ENCODE measurements at regions of chr2 and their contacts with region 1.

Region 1: GRCh38 chr2:101001691-101002561 is at the start of gene RPL31:
- DNase-seq: peak; percentile 86 to 92
- H3K4me3 ChIP-seq: peak within 1 kb of the TSS; percentile 96
- H3K27ac ChIP-seq: peak within 1 kb of the TSS; percentile 89
- H3K4me1 ChIP-seq: peaks cover 14% of the 10 kb centered on the region
- H3K27me3 ChIP-seq: no peaks in the 10 kb centered on the region
- CTCF ChIP-seq: no peak
- total RNA-seq, gene RPL31: 1,090 and 1,251 TPM in 2 replicates

Region 2: DNA sequence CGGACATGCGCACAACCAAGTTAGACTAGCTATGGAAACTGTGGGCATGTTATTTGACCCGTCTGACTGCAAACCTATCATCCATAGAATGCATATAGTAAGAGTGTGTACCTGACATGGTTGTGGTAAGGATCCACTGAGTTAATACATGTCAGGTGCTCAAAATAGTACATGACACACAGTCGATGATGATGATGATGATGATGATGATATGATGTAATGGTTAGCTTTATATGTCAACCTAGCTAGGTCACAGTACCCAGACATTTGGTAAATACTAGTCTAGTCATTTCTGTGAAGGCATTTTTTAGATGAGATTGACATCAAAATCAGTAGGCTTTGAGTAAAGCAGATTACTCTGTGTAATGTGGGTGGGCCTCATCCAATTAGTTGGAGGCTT is 1063.7 kb before region 1 on chr2:
- CTCF ChIA-PET with region 1: no interaction called
- POLR2A ChIA-PET with region 1: interaction called, 15 read pairs
- intact Hi-C with region 1: no loop called
- DNase-seq: no peak
- H3K4me3 ChIP-seq: no peak overlapping the region
- H3K27ac ChIP-seq: no peak overlapping the region
- H3K4me1 ChIP-seq: no peaks in the 10 kb centered on the region
- H3K27me3 ChIP-seq: peaks cover 70% of the 10 kb centered on the region
- CTCF ChIP-seq: no peak

Region 3: GRCh38 chr2:100761365-100761764 is 240.6 kb before region 1 on chr2:
- CTCF ChIA-PET with region 1: no interaction called
- POLR2A ChIA-PET with region 1: no interaction called
- intact Hi-C with region 1: no loop called
- DNase-seq: peak in 1 of 2 experiments; percentile 50
- H3K4me3 ChIP-seq: no peak overlapping the region
- H3K27ac ChIP-seq: peak overlapping the region; percentile 24; the same call in 1 of the 2 replicates
- H3K4me1 ChIP-seq: peaks cover 37% of the 10 kb centered on the region
- H3K27me3 ChIP-seq: no peaks in the 10 kb centered on the region
- CTCF ChIP-seq: no peak

Region 4: GRCh38 chr2:101052147-101052546 is 50.2 kb after region 1 on chr2:
- CTCF ChIA-PET with region 1: no interaction called
- POLR2A ChIA-PET with region 1: no interaction called
- intact Hi-C with region 1: no loop called
- DNase-seq: no peak
- H3K4me3 ChIP-seq: no peak overlapping the region
- H3K27ac ChIP-seq: no peak overlapping the region
- H3K4me1 ChIP-seq: peaks cover 10% of the 10 kb centered on the region
- H3K27me3 ChIP-seq: no peaks in the 10 kb centered on the region
- CTCF ChIP-seq: no peak

Region 5: DNA sequence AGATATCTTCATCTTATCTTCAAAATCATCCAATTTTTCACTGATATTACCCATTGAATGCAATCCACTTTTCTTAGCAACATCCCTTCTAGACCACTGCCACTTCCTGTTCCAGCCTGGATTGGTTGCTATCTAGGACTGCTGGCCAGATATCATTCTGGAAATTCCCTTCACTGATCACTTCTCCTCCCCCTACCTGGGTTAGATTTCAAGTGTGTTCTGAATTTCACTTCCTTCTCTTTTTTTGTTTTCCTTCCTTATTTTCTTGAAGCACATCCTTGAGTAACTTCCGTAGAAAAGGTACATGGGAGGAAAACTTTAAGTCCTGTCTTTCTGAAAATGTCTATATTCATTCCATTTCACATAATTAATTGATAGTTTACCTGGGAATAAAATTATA is 907.8 kb after region 1 on chr2:
- CTCF ChIA-PET with region 1: no interaction called
- POLR2A ChIA-PET with region 1: no interaction called
- intact Hi-C with region 1: no loop called
- DNase-seq: no peak
- H3K4me3 ChIP-seq: no peak overlapping the region
- H3K27ac ChIP-seq: no peak overlapping the region
- H3K4me1 ChIP-seq: no peaks in the 10 kb centered on the region
- H3K27me3 ChIP-seq: no peaks in the 10 kb centered on the region
- CTCF ChIP-seq: no peak